A673 (cell line): ENCODE measurements at regions of chr4 and their contacts with region 1.

Region 1: GRCh38 chr4:82268050-82268825 is 105.6 kb downstream of the HNRNPD start:
- DNase-seq: peak; percentile 80
- H3K4me3 ChIP-seq: no peak overlapping the region
- H3K27ac ChIP-seq: peak overlapping the region; percentile 70
- H3K4me1 ChIP-seq: peaks cover 11% of the 10 kb centered on the region
- H3K27me3 ChIP-seq: no peaks in the 10 kb centered on the region
- CTCF ChIP-seq: peak; percentile 74

Region 2: DNA sequence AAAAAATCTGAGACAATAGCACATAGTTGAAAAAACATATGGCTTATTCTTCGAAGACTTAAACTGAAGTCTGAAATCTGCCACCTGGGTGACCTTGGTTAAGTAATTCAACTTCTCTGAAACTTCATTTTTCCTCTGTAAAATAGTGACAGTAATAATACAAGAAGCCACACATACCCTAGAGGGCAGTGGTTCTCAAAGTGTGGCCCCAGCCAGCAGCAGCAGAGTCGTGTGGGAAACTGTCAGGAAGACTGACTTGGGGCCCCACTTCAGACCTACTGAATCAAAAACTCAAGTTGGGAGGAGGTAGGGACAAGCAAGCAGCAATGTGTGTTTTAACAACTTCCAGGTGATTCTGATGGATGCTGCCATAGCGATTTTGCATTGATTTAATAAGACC is 144.3 kb before region 1 on chr4:
- CTCF ChIA-PET with region 1: no interaction called
- POLR2A ChIA-PET with region 1: no interaction called
- intact Hi-C with region 1: no loop called
- DNase-seq: peak; percentile 18
- H3K4me3 ChIP-seq: no peak overlapping the region
- H3K27ac ChIP-seq: no peak overlapping the region
- H3K4me1 ChIP-seq: no peaks in the 10 kb centered on the region
- H3K27me3 ChIP-seq: no peaks in the 10 kb centered on the region
- CTCF ChIP-seq: peak; percentile 29; the same call in 1 of the 2 replicates

Region 3: DNA sequence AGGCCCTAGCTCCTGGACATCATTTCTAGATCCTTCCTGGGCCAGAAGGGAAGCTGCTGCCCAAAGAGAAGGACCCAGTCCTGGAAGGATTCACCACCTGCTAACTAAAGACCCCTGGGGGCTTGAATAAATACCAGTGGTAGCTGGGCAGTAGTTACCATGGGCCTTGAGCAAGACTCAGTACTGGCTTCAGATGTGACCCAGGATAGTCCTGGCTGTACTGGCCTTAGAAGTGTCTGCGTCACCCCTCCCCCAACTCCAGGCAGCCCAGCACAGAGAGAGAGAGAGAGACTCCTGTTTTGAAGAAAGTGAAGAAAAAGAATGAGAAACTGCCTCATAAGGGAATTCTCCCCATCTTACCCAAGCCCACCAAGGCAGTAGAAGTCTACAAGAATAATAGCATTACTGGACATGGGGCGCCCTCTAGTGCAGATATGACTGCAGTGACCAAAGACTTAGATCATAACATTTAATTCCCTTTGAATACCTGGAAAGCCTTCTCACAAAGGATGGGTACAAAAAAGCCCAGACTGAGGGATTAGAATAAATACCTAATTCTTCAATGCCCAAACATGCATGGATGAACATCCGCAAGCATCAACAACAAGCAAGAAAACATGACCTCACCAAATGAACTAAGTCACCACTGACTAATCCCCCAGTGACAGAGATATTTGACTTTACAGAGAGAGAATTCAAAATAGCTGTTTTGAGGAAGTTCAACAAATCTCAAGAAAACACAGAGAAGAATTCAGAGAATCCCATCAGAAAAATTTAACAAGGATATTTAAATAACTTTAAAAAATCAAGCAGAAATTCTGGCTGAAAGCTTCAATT is 66.2 kb before region 1 on chr4:
- CTCF ChIA-PET with region 1: no interaction called
- POLR2A ChIA-PET with region 1: no interaction called
- intact Hi-C with region 1: loop called (anchors 1 kb)
- DNase-seq: peak; percentile 80
- H3K4me3 ChIP-seq: no peak overlapping the region
- H3K27ac ChIP-seq: no peak overlapping the region
- H3K4me1 ChIP-seq: no peaks in the 10 kb centered on the region
- H3K27me3 ChIP-seq: no peaks in the 10 kb centered on the region
- CTCF ChIP-seq: peak; percentile 70

Region 4: DNA sequence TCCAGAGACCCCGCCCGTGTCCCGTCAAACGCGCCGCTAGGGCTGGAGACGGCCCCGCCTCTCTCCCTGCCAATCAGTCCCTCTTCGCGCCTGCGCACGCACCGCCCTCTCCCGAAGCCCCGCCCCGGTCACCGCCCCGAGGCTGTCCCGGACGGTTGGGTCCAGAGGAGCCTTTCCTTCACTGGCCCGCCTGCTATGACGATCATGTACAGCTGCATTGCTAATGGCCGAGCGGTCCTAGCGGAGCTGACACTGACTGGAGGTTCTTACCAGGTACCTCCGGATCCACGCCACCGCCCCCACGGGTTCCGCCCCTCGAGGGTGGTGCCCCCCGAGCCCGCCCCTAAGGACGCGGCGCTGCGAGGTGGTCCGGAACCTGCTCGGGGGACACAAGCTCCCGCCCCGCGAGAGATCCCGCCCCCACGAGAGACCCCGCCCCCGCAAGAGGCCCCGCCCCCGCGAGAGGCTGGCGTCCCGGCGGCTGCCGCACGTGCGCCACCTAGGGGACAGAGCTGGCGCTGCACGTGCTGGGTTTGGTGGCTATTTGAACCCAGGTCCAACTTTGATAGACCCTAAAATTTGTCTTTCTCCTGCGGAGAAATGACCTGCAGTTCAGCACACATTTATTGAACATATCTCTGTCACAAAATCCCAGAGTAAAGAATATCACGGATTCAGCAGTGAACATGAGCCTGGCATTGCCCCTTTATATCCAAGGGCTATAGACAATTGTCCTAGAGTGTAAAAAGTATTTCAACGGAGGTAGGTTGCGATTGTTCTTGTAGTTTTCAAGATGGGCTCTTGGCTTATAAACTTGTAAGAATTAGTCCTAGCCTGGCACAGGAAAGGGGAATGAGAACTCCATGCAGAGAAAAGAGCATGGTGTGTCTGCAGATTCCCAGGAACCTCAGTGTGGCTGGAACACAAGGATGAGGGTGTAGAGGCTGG is 16.9 kb after region 1 on chr4:
- CTCF ChIA-PET with region 1: interaction called, 10 read pairs
- POLR2A ChIA-PET with region 1: no interaction called
- intact Hi-C with region 1: no loop called
- DNase-seq: peak; percentile 96
- H3K4me3 ChIP-seq: peak overlapping the region; percentile 42
- H3K27ac ChIP-seq: no peak overlapping the region
- H3K4me1 ChIP-seq: no peaks in the 10 kb centered on the region
- H3K27me3 ChIP-seq: no peaks in the 10 kb centered on the region
- CTCF ChIP-seq: peak; percentile 76